ENCODE measurements at regions of chr2 and their contacts with region 1.

Region 1: DNA sequence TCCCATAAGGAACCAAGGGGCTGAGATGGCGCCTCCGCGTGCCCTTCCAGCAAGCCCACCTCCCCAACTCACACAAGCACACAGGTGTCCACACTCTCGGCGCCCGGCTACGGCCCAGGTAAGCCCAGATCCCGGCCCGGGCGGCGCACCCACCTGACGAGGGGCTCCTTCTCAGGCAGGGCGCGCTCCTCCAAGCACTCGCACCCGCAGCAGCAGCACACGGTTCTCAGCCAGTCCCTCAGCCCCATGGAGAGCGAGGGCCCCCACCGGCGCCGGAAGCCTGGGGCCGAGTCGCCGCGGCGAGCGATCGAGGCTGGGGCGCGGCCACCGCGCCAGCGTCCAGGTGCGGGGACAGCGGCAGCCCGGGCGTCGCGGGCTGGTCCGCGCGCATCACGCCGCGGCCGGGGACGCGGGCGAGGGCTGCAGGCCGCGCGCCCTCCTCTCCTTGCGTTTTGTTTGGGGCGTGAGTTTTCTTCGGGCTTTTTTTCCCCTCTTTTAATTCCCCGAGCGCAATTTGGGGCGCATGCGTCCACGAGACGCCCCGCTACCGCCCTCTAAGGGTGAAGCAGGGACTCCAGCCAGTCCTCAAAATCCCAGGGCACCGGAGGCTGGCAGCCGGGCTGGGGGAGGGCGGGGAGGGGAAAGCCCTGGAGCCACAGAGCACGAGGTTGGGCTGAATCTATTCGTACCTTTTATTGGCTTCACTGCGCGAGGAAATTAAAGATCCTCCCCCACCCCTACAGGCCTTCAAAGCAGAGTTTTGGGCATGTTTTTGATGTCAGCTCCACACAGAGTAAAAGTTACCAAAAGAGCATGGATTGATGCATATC is at the start of gene MREG:
- DNase-seq: peak; percentile 81 to 83 (median 82)
- ATAC-seq: peak; percentile 92
- H3K4me3 ChIP-seq: peak within 1 kb of the TSS; percentile 63
- H3K27ac ChIP-seq: no peak within 1 kb of the TSS
- H3K4me1 ChIP-seq: peaks cover 0 to 10% of the 10 kb centered on the region in 2 experiments; a peak in 4 of 5 replicates
- H3K27me3 ChIP-seq: no peaks in the 10 kb centered on the region
- CTCF ChIP-seq: peak; percentile 39 to 65 (median 62); a peak in 5 of 6 replicates
- EP300 ChIP-seq: no peak
- POLR2A ChIP-seq: no peak
- RAD21 ChIP-seq: peak in 1 of 2 experiments; percentile 8; a peak in 1 of 4 replicates
- polyA plus RNA-seq, gene MREG: 0.77 to 1.0 TPM

Region 2: GRCh38 chr2:215969131-215969841 is 44.0 kb before region 1 on chr2:
- CTCF ChIA-PET with region 1: no interaction called
- POLR2A ChIA-PET with region 1: no interaction called
- in situ Hi-C with region 1: no loop called
- intact Hi-C with region 1: loop called (anchors 5 kb)
- DNase-seq: no peak
- ATAC-seq: no peak
- H3K4me3 ChIP-seq: no peak overlapping the region
- H3K27ac ChIP-seq: no peak overlapping the region
- H3K4me1 ChIP-seq: peaks cover 7 to 26% of the 10 kb centered on the region in 2 experiments; a peak in 4 of 5 replicates
- H3K27me3 ChIP-seq: no peaks in the 10 kb centered on the region
- CTCF ChIP-seq: no peak
- EP300 ChIP-seq: no peak
- POLR2A ChIP-seq: no peak
- RAD21 ChIP-seq: no peak

Region 3: GRCh38 chr2:216151313-216152030 is 138.2 kb after region 1 on chr2:
- CTCF ChIA-PET with region 1: no interaction called
- POLR2A ChIA-PET with region 1: no interaction called
- in situ Hi-C with region 1: no loop called
- intact Hi-C with region 1: no loop called
- DNase-seq: no peak
- ATAC-seq: peak; percentile 49; the same call in 1 of the 3 replicates
- H3K4me3 ChIP-seq: no peak overlapping the region
- H3K27ac ChIP-seq: no peak overlapping the region
- H3K4me1 ChIP-seq: no peaks in the 10 kb centered on the region
- H3K27me3 ChIP-seq: no peaks in the 10 kb centered on the region
- CTCF ChIP-seq: peak in 1 of 3 experiments; percentile 28; a peak in 1 of 6 replicates
- EP300 ChIP-seq: no peak
- POLR2A ChIP-seq: no peak
- RAD21 ChIP-seq: peak; percentile 34 to 44; a peak in 3 of 4 replicates

Measured in K562 (cell line).